BJ (cell line): ENCODE measurements at regions of chr1 and their contacts with region 1.

Region 1: DNA sequence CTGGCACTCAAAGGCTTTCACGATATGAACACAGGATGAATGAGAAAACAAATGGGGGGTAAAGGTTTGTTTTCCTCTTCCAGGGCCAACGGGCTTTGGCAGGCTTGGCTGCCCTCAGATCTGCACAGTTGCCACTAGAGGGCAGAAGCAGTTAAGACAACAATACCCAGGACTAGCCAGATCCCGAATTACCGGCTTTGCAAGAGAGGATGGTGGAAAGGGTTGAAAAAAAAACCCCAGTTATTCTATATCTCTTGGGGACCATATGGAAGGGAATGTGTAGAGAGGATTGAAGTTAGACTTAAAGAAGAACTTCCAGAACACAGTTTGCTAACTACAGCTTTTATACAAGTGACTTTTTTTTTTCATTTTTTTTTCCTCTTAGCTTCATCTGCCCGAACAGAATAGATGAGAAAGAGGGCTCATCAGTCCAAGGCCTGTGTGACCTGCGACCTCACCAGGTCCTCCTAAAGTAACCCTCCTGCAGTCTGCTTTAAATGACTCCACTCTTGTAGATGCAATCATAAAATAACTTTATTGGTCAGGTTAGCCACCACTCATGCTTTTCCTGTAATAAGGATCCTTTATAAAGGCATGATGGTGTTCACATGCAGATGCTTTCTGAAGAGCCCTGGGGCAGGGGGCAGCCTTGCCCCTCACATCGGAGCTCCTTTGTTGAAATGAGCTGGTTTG is 10.7 kb downstream of the FMOD start:
- DNase-seq: no peak
- H3K4me3 ChIP-seq: no peak overlapping the region
- H3K27me3 ChIP-seq: peaks cover 19% of the 10 kb centered on the region
- CTCF ChIP-seq: peak; percentile 91

Region 2: GRCh38 chr1:203326830-203327683 is 13.2 kb before region 1 on chr1:
- CTCF ChIA-PET with region 1: interaction called, 25 read pairs
- POLR2A ChIA-PET with region 1: no interaction called
- DNase-seq: no peak
- H3K4me3 ChIP-seq: peak overlapping the region; percentile 49
- H3K27me3 ChIP-seq: peaks cover 32% of the 10 kb centered on the region
- CTCF ChIP-seq: no peak

Region 3: DNA sequence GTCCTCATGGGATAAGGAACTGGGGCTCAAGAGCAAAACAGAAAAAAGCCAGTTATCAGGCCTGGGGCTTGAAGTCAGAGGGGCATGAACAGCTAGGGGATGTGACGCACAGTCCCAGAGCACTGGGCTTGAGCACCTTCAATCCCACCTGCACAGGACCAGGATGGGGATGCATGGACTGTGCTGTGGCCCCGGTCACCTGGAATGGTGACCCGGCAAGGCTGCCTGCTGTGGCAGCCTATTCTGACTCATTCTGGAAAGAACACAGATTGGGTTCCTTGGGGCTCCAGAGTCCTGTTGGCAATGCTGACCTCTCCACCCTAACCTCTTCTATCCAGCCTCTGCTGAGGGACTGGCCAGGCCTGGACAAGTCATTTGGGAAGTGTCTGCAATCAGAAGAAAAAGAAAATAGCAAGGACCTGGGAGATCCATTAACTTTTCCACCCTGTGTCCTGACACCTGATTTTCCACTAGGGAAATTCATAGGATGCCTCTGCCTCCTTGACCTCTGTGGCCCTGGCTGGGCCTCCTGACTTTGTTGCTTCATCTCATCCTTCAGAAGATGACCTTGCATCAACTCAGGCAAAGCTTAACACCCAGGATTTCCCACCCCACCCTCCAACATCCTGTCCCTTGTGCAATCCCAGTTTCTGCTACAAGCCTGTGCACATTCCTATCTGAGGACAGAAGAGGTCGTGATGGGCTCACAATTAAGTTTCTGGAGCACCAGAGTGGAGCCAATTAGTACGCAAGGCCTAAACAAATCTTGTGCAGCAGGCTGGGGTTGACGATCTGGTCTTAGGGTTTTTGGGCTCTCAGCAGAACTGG is 28.6 kb after region 1 on chr1:
- CTCF ChIA-PET with region 1: interaction called, 47 read pairs
- POLR2A ChIA-PET with region 1: no interaction called
- DNase-seq: peak; percentile 61
- H3K4me3 ChIP-seq: no peak overlapping the region
- H3K27me3 ChIP-seq: peaks cover 7% of the 10 kb centered on the region
- CTCF ChIP-seq: peak; percentile 59

Region 4: DNA sequence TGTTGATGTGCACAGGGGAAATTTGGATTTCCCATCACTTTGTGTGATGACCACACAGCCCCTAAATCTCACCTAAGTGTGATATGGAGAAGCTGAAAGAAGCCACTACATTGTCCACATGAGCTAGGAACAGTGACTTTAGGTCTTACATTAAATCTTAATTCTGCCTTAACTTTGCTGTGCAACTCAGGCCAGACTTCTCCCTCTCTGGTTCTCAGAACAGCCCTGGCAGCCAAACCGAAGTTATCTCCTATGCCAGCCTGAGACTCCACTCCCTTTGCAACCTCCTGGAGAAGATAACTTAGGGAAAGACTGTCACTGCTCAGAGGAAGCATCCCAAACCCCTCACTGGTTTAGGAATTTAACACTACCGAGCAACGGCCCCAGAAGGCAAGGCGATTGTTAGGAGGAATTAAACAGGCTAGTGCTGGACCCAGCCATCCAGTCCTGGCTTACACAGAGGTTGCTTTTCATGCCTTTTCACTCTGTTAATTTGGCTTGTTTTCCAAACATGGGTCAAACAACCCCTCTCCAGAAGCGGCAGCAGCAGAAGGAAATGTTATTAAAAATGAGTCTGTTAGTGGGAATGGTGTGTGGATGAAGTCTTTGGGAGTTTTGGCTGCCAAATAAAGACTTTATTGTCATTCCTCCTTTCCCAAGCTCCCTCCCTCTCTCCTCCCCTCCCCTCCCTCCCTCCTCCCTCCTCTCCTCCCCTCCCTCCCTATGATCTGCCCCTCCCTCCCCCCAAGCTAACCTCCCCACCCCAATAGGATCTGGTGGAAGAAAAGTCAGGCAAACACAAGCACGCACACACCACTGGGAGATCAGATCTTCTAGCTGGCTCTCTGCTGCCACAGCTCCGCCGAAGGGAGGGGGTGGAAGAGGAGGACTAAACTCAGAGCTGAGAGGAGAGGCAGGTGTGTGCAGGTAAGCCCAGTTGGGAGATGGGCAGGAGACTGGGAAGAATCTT is 135.0 kb after region 1 on chr1 and contains the start of gene PRELP:
- CTCF ChIA-PET with region 1: interaction called, 52 read pairs
- POLR2A ChIA-PET with region 1: interaction called, 11 read pairs
- DNase-seq: no peak
- H3K4me3 ChIP-seq: peak within 1 kb of the TSS; percentile 40
- H3K27me3 ChIP-seq: no peaks in the 10 kb centered on the region
- CTCF ChIP-seq: 0 out of 2 replicates have a peak, but pooled peaks have one; percentile 20
- polyA plus RNA-seq, gene PRELP: 2.8 and 3.9 TPM in 2 replicates

Region 5: GRCh38 chr1:203492082-203492747 is 152.0 kb after region 1 on chr1:
- CTCF ChIA-PET with region 1: interaction called, 203 read pairs
- POLR2A ChIA-PET with region 1: no interaction called
- DNase-seq: no peak
- H3K4me3 ChIP-seq: no peak overlapping the region
- H3K27me3 ChIP-seq: no peaks in the 10 kb centered on the region
- CTCF ChIP-seq: no peak